RWPE1 (cell line): ENCODE measurements at regions of chr19 and their contacts with region 1.

Region 1: GRCh38 chr19:1113033-1113985 is 9.5 kb downstream of the GPX4 start:
- DNase-seq: peak; percentile 61
- H3K27ac ChIP-seq: peak overlapping the region; percentile 100
- CTCF ChIP-seq: peak; percentile 89

Region 2: DNA sequence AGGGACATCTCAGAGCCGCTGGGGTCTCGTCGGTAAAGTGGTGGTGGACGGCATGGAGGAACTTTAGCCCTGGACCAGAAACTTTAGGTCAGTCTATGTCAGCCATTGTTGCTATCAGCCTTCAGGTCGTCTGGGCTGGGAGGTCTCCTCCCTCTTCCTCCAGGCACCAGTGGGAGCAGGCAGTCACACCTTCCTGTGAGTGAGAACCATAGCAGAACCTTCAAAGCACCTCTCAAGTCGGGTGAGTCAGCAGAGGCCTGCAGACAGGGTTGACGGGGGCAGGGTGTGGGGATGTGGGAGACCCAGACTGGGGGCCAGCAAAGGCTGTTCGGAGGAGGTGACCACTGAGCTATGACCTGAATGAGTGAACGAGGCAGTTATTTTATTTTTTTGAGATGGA is 76.1 kb after region 1 on chr19:
- CTCF ChIA-PET with region 1: interaction called, 22 read pairs
- POLR2A ChIA-PET with region 1: no interaction called
- DNase-seq: no peak
- H3K27ac ChIP-seq: peak overlapping the region; percentile 68
- CTCF ChIP-seq: no peak